ENCODE measurements at regions of chr1 and their contacts with region 1.

Region 1: DNA sequence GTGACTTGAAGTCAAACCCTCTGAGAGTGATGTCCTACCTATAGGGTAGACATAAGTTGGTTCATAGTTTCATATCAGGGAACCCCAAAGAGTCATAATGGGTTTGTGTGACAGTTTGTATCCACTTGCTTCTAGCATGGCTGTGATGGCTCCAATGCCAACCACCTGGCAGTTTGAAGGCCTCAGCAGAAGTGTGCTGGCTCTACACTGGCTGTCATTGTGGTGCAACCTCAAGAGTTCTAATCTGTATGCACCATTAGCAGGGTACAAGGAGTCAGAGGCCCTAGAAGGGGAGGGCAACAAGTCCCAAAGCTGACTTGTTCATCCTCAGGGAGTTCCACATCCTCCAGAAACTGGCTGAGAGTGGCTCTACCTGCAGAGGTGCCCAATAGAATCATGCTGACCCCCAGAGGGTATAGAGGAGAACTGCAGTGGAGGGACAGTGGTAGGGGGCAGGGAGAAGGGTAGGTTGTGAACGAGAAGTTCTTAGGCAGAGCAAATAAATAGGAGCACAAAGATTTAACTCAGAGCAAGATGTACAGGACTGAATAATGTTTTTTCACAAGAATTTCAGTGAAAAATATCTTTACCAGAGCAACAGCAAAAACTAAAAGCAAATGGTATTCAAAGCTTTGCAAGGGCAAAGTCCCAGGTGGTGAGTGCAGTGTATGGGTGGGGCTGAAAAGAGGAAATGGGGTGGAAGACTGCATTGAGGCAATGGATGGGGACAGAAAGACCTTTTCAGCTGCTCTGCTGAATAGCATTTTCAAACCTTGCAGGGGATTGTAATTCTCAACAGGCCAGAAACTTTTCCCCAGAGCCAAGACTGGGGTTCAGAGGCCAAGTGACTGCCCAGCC is 3.2 kb downstream of the FCRL2 start:
- DNase-seq: peak in 1 of 2 experiments; percentile 29
- H3K4me3 ChIP-seq: no peak overlapping the region
- H3K27ac ChIP-seq: no peak overlapping the region
- H3K4me1 ChIP-seq: no peaks in the 10 kb centered on the region
- H3K27me3 ChIP-seq: no peaks in the 10 kb centered on the region; a peak in 1 of 7 replicates
- CTCF ChIP-seq: peak; percentile 70 to 83 (median 79)
- EP300 ChIP-seq: no peak
- POLR2A ChIP-seq: no peak
- RAD21 ChIP-seq: peak; percentile 85 to 89

Region 2: GRCh38 chr1:157739229-157739901 is 34.4 kb before region 1 on chr1:
- CTCF ChIA-PET with region 1: interaction called, 21 read pairs
- POLR2A ChIA-PET with region 1: no interaction called
- DNase-seq: no peak
- H3K4me3 ChIP-seq: no peak overlapping the region
- H3K27ac ChIP-seq: no peak overlapping the region
- H3K4me1 ChIP-seq: no peaks in the 10 kb centered on the region
- H3K27me3 ChIP-seq: no peaks in the 10 kb centered on the region
- CTCF ChIP-seq: peak; percentile 10 to 39 (median 17); a peak in 2 of 4 replicates
- EP300 ChIP-seq: no peak
- POLR2A ChIP-seq: no peak
- RAD21 ChIP-seq: peak; percentile 19 to 41; a peak in 2 of 4 replicates

Region 3: GRCh38 chr1:157751283-157751682 is 22.4 kb before region 1 on chr1:
- CTCF ChIA-PET with region 1: interaction called, 15 read pairs
- POLR2A ChIA-PET with region 1: no interaction called
- DNase-seq: no peak
- H3K4me3 ChIP-seq: no peak overlapping the region
- H3K27ac ChIP-seq: no peak overlapping the region
- H3K4me1 ChIP-seq: peaks cover 0 to 5% (median 4%) of the 10 kb centered on the region in 4 experiments; a peak in 3 of 7 replicates
- H3K27me3 ChIP-seq: no peaks in the 10 kb centered on the region
- CTCF ChIP-seq: peak in 1 of 3 experiments; percentile 30; a peak in 1 of 4 replicates
- EP300 ChIP-seq: no peak
- POLR2A ChIP-seq: no peak
- RAD21 ChIP-seq: peak; percentile 26 to 31

Region 4: DNA sequence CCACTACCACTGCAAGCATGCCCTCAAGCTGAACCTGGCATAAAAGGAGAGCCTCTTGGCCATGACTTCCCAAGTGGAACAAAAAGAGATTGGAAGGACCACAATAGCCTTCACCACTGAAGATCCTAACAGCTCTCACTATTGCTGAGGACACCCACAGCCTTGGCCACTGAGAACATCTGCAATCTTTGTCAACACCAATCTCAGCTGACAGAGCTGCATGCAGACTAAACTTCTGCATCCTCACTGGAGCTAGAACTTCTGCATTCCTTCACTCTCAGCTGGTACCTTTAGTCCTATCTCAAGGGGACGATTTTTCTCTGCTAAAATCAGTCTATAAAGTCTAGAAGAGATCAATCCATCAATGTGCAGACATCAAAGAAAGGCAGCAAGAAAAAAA is 11.5 kb after region 1 on chr1:
- CTCF ChIA-PET with region 1: interaction called, 20 read pairs
- POLR2A ChIA-PET with region 1: no interaction called
- DNase-seq: no peak
- H3K4me3 ChIP-seq: no peak overlapping the region
- H3K27ac ChIP-seq: no peak overlapping the region
- H3K4me1 ChIP-seq: no peaks in the 10 kb centered on the region
- H3K27me3 ChIP-seq: no peaks in the 10 kb centered on the region
- CTCF ChIP-seq: no peak
- EP300 ChIP-seq: no peak
- POLR2A ChIP-seq: no peak
- RAD21 ChIP-seq: no peak

Region 5: DNA sequence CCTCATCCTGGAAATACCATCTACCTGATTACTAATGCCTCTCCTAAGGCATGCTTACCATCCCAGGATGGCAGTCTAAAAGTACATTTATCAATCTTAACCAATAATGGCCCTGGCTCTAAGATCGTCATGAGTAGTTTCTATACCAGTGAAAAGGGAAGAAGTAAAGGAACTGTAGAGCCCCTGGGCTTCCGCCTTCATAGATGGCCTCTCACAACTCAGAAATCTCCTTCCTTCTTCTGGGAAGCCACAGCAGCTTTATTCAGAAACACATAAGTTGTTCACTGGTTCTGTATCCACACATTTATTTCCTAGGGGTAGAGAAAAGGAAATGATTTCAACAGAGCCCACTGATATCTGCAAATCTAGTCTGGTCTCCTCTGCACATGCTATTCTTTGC is 108.9 kb after region 1 on chr1:
- CTCF ChIA-PET with region 1: no interaction called
- POLR2A ChIA-PET with region 1: no interaction called
- DNase-seq: no peak
- H3K4me3 ChIP-seq: no peak overlapping the region
- H3K27ac ChIP-seq: no peak overlapping the region
- H3K4me1 ChIP-seq: no peaks in the 10 kb centered on the region
- H3K27me3 ChIP-seq: no peaks in the 10 kb centered on the region; a peak in 1 of 7 replicates
- CTCF ChIP-seq: no peak
- EP300 ChIP-seq: no peak
- POLR2A ChIP-seq: no peak
- RAD21 ChIP-seq: no peak

Measured in H1 (cell line).